GM12878 (cell line): ENCODE measurements at regions of chr3 and their contacts with region 1.

Region 1: GRCh38 chr3:69161587-69162307 is 39.4 kb upstream of the LMOD3 start:
- DNase-seq: peak; percentile 25
- ATAC-seq: peak; percentile 83
- H3K4me3 ChIP-seq: no peak overlapping the region
- H3K27ac ChIP-seq: no peak overlapping the region
- H3K4me1 ChIP-seq: no peaks in the 10 kb centered on the region
- H3K27me3 ChIP-seq: no peaks in the 10 kb centered on the region
- CTCF ChIP-seq: peak; percentile 89 to 95 (median 94); a peak in 5 of 6 replicates
- EP300 ChIP-seq: no peak
- POLR2A ChIP-seq: no peak
- RAD21 ChIP-seq: peak; percentile 100

Region 2: DNA sequence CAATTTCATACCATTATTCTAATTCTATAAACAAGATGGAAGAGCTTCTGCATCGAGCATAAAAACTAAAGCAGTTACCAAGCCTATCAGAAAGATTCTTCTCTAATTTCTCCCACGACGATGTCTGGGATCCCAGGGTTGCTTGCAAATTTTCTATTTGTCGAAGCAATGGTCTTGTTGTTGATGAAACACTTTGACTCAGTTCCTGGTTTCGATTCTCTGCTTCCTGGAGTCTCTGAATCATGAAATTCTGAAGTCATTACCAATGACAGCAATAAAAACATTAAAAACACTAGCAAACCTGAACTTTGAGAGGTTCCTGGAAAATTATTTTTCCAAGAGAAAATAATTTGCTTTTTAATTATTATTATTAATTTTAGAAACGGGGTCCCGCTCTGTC is 128.3 kb before region 1 on chr3:
- CTCF ChIA-PET with region 1: no interaction called
- POLR2A ChIA-PET with region 1: no interaction called
- RAD21 ChIA-PET with region 1: no interaction called
- SMC1A ChIA-PET with region 1: no interaction called
- in situ Hi-C with region 1: no loop called
- intact Hi-C with region 1: no loop called
- DNase-seq: no peak
- ATAC-seq: no peak
- H3K4me3 ChIP-seq: no peak overlapping the region
- H3K27ac ChIP-seq: no peak overlapping the region
- H3K4me1 ChIP-seq: no peaks in the 10 kb centered on the region
- H3K27me3 ChIP-seq: no peaks in the 10 kb centered on the region
- CTCF ChIP-seq: no peak
- EP300 ChIP-seq: no peak
- POLR2A ChIP-seq: no peak
- RAD21 ChIP-seq: no peak

Region 3: GRCh38 chr3:69051756-69052471 is 109.8 kb before region 1 on chr3 and contains the start of gene TMF1:
- CTCF ChIA-PET with region 1: no interaction called
- POLR2A ChIA-PET with region 1: no interaction called
- RAD21 ChIA-PET with region 1: no interaction called
- SMC1A ChIA-PET with region 1: no interaction called
- in situ Hi-C with region 1: no loop called
- intact Hi-C with region 1: no loop called
- DNase-seq: peak; percentile 97
- ATAC-seq: peak; percentile 92
- H3K4me3 ChIP-seq: peak within 1 kb of the TSS; percentile 98
- H3K27ac ChIP-seq: peak within 1 kb of the TSS; percentile 73
- H3K4me1 ChIP-seq: peaks cover 3% of the 10 kb centered on the region; the same call in 1 of the 2 replicates
- H3K27me3 ChIP-seq: no peaks in the 10 kb centered on the region
- CTCF ChIP-seq: no peak
- EP300 ChIP-seq: no peak
- POLR2A ChIP-seq: peak; percentile 89
- RAD21 ChIP-seq: no peak
- polyA plus RNA-seq, gene TMF1: 7.1 to 7.9 TPM

Region 4: DNA sequence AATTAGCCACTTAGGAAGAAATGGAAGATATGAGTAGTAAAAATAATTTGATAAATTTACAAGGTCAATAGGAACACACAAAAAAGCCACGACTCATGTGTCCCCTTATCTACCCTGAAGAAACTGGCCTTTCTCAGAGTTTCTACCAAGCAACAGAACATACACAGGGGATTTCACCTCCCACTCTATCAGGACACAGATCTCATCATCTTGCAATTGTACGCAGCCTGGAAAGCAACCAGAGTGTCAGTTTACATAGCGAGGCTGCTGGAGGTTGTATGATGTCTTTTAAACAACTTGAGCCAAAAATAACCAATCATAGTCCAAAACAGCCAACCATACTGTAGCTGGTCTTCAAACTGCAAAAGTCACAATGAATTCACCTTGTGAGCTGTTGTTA is 19.7 kb before region 1 on chr3:
- CTCF ChIA-PET with region 1: interaction called, 16 read pairs
- POLR2A ChIA-PET with region 1: no interaction called
- RAD21 ChIA-PET with region 1: interaction called, 3 read pairs
- SMC1A ChIA-PET with region 1: interaction called, 8 read pairs
- in situ Hi-C with region 1: no loop called
- intact Hi-C with region 1: no loop called
- DNase-seq: no peak
- ATAC-seq: no peak
- H3K4me3 ChIP-seq: no peak overlapping the region
- H3K27ac ChIP-seq: no peak overlapping the region
- H3K4me1 ChIP-seq: no peaks in the 10 kb centered on the region
- H3K27me3 ChIP-seq: no peaks in the 10 kb centered on the region
- CTCF ChIP-seq: no peak
- EP300 ChIP-seq: no peak
- POLR2A ChIP-seq: no peak
- RAD21 ChIP-seq: no peak

Region 5: GRCh38 chr3:69207031-69207430 is 45.3 kb after region 1 on chr3:
- CTCF ChIA-PET with region 1: interaction called, 10 read pairs
- POLR2A ChIA-PET with region 1: no interaction called
- RAD21 ChIA-PET with region 1: interaction called, 13 read pairs
- SMC1A ChIA-PET with region 1: interaction called, 48 read pairs
- in situ Hi-C with region 1: no loop called
- intact Hi-C with region 1: no loop called
- DNase-seq: no peak
- ATAC-seq: peak; percentile 9; the same call in 1 of the 3 replicates
- H3K4me3 ChIP-seq: no peak overlapping the region
- H3K27ac ChIP-seq: no peak overlapping the region
- H3K4me1 ChIP-seq: peaks cover 15% of the 10 kb centered on the region
- H3K27me3 ChIP-seq: no peaks in the 10 kb centered on the region
- CTCF ChIP-seq: no peak
- EP300 ChIP-seq: no peak
- POLR2A ChIP-seq: no peak
- RAD21 ChIP-seq: no peak

Region 6: GRCh38 chr3:69250014-69250413 is 88.3 kb after region 1 on chr3:
- CTCF ChIA-PET with region 1: interaction called, 7 read pairs
- POLR2A ChIA-PET with region 1: no interaction called
- RAD21 ChIA-PET with region 1: interaction called, 7 read pairs
- SMC1A ChIA-PET with region 1: interaction called, 15 read pairs
- in situ Hi-C with region 1: no loop called
- intact Hi-C with region 1: no loop called
- DNase-seq: no peak
- ATAC-seq: no peak
- H3K4me3 ChIP-seq: no peak overlapping the region
- H3K27ac ChIP-seq: no peak overlapping the region
- H3K4me1 ChIP-seq: no peaks in the 10 kb centered on the region
- H3K27me3 ChIP-seq: no peaks in the 10 kb centered on the region
- CTCF ChIP-seq: no peak
- EP300 ChIP-seq: no peak
- POLR2A ChIP-seq: no peak
- RAD21 ChIP-seq: no peak

Region 7: DNA sequence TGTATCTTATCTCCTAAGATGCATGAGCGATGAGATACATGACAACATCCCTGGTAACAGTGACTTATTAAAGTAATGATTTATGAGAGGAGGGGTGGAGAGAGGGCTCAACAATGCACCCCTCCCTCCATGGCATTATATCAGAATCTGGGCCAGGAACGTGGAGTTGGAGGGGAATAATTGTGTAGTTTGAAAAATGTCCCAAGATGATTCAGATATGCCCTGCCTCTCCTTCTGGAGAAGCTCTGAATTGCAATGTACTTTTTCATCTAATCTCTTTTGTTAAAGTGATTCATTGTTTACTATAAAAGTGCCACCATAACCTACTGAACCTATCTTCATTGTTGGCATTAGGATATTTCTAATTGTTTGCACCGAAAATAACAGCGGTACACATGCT is 137.6 kb after region 1 on chr3:
- CTCF ChIA-PET with region 1: interaction called, 625 read pairs
- POLR2A ChIA-PET with region 1: interaction called, 3 read pairs
- RAD21 ChIA-PET with region 1: interaction called, 379 read pairs
- SMC1A ChIA-PET with region 1: interaction called, 505 read pairs
- in situ Hi-C with region 1: no loop called
- intact Hi-C with region 1: no loop called
- DNase-seq: no peak
- ATAC-seq: no peak
- H3K4me3 ChIP-seq: no peak overlapping the region
- H3K27ac ChIP-seq: no peak overlapping the region
- H3K4me1 ChIP-seq: peaks cover 3% of the 10 kb centered on the region
- H3K27me3 ChIP-seq: no peaks in the 10 kb centered on the region
- CTCF ChIP-seq: no peak
- EP300 ChIP-seq: no peak
- POLR2A ChIP-seq: no peak
- RAD21 ChIP-seq: no peak

Region 8: GRCh38 chr3:69410250-69410649 is 248.5 kb after region 1 on chr3:
- CTCF ChIA-PET with region 1: interaction called, 68 read pairs
- POLR2A ChIA-PET with region 1: no interaction called
- RAD21 ChIA-PET with region 1: interaction called, 37 read pairs
- SMC1A ChIA-PET with region 1: interaction called, 27 read pairs
- in situ Hi-C with region 1: no loop called
- intact Hi-C with region 1: no loop called
- DNase-seq: peak; percentile 61
- ATAC-seq: peak; percentile 100
- H3K4me3 ChIP-seq: no peak overlapping the region
- H3K27ac ChIP-seq: no peak overlapping the region
- H3K4me1 ChIP-seq: no peaks in the 10 kb centered on the region
- H3K27me3 ChIP-seq: no peaks in the 10 kb centered on the region
- CTCF ChIP-seq: peak; percentile 85 to 92 (median 86)
- EP300 ChIP-seq: no peak
- POLR2A ChIP-seq: no peak
- RAD21 ChIP-seq: peak; percentile 76

Region 9: DNA sequence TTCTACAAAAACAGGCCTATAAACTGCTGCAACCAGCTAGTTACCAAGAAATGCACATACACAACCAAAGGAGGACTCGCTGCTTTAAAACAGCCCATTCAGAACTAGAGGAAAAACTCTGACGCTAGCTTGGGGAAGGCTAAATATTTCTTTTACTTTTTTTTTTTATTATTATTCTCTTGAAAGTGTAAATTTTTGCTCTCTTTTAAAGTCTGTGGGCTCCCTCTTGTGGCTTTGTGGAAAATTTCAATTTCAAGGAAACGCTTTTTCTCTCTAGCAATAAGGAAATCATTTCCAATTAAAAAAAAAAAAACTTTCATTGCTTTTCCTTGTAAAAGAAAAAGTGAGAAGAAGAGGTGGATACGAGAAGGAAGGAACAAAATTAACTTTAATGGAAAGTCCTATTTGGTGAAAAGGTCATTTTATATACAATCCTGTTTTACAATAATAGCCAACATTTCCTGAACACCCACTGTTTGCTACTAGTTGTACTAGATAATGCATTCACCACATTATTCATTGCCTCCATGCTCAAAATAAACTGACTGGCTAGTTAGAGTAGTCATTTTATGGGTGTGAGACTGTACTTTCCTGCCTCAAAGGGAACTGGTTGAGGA is 786.6 kb after region 1 on chr3:
- CTCF ChIA-PET with region 1: interaction called, 3 read pairs
- POLR2A ChIA-PET with region 1: no interaction called
- RAD21 ChIA-PET with region 1: no interaction called
- SMC1A ChIA-PET with region 1: no interaction called
- in situ Hi-C with region 1: loop called (anchors 25 kb)
- intact Hi-C with region 1: no loop called
- DNase-seq: no peak
- ATAC-seq: no peak
- H3K4me3 ChIP-seq: no peak overlapping the region
- H3K27ac ChIP-seq: no peak overlapping the region
- H3K4me1 ChIP-seq: no peaks in the 10 kb centered on the region
- H3K27me3 ChIP-seq: no peaks in the 10 kb centered on the region; a peak in 1 of 4 replicates
- CTCF ChIP-seq: peak; percentile 33 to 41 (median 41); a peak in 5 of 6 replicates
- EP300 ChIP-seq: no peak
- POLR2A ChIP-seq: no peak
- RAD21 ChIP-seq: peak; percentile 55